ENCODE measurements at regions of chr16 and their contacts with region 1.

Region 1: GRCh38 chr16:23072084-23072599 is 77.1 kb downstream of the USP31 start:
- DNase-seq: peak; percentile 93
- ATAC-seq: peak; percentile 87

Region 2: GRCh38 chr16:22915003-22915402 is 157.1 kb before region 1 on chr16:
- intact Hi-C with region 1: no loop called
- DNase-seq: no peak
- ATAC-seq: no peak

Region 3: GRCh38 chr16:23107936-23108335 is 35.8 kb after region 1 on chr16:
- intact Hi-C with region 1: no loop called
- DNase-seq: no peak
- ATAC-seq: peak; percentile 60

Region 4: DNA sequence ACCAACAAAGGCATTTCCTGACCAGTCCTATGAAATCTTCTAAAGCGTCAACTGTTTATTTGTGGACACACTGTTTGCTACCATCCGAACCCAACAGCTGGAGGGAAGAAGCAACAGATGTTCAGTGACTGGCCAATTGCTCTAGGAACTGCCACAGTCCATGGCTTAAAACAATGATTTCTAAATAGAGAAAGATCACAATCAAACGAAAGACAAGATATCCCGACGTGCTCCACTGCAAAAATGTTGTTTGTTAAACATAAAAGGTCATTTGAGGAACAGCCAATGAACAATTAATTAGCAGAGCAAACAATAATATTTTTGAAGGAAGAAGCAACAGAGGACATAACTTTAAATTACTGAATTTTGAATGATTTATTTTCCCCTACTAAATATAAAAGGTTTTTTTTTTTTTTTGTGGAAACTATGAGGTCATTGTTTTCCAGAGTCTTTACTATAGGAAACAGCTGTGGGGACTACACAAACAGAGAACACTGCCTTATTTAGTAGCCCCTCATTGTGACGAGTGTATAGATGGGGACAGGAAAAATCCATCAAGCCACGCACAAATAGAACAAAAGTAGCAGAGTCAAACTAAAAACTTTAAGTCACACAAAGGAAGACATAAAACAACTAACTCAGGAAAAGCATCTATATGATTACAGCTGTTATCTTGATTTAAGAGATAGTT is 59.9 kb after region 1 on chr16:
- intact Hi-C with region 1: loop called (anchors 5 kb)
- DNase-seq: no peak
- ATAC-seq: peak; percentile 15

Region 5: GRCh38 chr16:23149349-23149996 is 77.3 kb after region 1 on chr16 and contains the start of gene USP31:
- intact Hi-C with region 1: loop called (anchors 5 kb)
- DNase-seq: peak; percentile 98
- ATAC-seq: peak; percentile 97
- total RNA-seq, gene USP31: 25.7 TPM

Region 6: DNA sequence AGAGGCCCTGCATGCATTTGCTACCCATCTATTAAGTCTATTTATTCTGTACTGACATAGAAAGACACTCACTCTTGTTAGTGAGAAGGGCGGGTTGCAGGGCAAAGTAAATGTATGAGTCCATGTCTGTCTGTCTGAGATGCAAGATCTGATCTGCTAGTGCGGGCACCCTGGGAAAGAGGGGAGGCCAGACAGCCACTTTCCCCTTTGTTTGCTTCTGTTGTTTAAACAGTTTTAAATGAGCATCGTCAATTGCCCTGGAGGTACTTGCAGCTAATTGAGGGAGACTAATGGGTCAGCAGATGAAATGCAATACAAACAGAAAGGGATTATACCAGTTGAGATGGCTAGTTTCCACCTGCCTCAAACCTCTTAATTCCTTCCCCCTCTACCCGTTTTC is 135.4 kb after region 1 on chr16:
- intact Hi-C with region 1: no loop called
- DNase-seq: no peak
- ATAC-seq: no peak

Region 7: DNA sequence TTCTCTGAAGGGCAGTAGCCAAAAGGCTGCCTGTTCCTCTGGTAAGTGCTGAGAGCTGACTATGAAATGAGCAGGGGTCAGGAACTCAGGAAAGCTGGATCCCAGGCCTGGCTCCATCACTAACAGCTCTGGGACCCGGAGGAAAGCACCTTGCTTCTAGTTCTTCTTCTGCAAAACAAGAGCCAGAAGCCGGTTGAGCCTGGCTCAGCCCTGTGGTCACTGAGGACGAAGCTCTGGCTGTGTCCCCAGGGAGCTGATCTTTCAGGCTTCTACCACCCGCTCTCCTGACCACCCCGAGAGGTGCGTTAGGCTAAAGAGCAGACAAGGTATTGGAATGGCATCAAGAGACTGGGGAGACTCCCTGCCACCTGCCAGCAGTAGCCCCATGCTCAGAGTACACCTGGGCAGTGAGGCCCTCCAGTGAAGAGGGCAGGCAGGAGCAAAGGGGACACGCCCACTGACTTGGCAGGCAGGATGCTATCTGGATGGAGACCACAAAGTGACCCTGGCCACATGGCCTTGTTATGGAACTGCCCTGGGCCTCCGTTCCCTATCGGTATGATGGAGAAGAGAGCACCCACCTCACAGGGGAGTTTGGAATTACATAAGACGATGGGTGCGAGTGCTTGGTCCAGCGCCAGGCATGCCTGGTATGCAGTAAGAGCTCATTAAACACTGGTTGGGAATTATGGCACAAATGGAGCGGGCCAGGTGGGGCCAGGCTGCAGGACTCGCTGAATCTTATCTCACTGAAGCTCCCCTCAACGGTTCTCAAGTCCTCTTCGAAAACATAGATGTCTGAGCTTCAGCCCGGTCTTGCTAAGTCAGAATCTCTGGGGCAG is 319.5 kb after region 1 on chr16:
- intact Hi-C with region 1: no loop called
- DNase-seq: no peak
- ATAC-seq: no peak